K562 (cell line): ENCODE measurements at regions of chr7 and their contacts with region 1.

Region 1: DNA sequence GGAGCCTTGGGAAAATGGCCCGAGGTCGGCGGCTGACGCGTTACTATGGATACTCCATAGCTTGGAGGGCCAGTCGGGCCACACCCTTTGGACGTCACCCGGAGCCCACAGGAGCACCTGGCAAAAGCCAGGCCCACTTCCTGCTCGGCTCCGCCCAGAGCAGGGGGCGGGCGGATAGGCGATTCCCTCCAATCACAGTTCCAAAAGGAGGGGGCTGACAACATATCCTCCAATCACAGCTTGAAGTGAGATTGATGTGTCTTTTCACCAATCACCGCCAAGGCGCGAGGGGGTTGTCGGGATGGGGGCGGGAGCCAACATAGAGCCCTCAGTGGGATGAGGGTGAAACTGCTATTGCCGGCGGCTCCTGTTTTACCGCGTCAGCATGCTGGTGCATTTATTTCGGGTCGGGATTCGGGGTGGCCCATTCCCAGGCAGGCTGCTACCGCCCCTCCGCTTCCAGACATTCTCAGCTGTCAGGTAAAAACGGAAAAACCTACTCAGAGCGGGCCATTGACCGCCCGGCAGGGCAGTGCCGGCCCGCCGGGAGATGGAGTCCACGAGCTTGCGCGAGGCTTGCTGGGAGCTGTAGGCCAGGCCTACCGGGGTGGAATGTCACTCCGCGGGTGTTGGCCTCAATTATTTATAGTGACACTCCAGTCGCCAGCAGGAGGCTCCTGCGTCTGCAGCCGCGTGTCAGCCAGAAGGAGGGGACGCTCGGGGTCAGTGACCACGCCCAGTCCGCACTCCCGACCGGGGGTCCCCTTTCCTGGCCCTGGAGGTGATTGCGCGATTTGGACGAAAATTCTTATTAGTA is at the start of gene ABCB8:
- DNase-seq: peak; percentile 100
- ATAC-seq: peak; percentile 93
- H3K4me3 ChIP-seq: peak within 1 kb of the TSS; percentile 58
- H3K27ac ChIP-seq: peak within 1 kb of the TSS; percentile 73
- H3K4me1 ChIP-seq: peaks cover 35 to 56% of the 10 kb centered on the region in 2 experiments
- H3K27me3 ChIP-seq: no peaks in the 10 kb centered on the region
- CTCF ChIP-seq: peak; percentile 92 to 96 (median 93)
- EP300 ChIP-seq: peak; percentile 50; the same call in 1 of the 2 replicates
- POLR2A ChIP-seq: peak; percentile 88
- RAD21 ChIP-seq: peak; percentile 85 to 89
- polyA plus RNA-seq, gene ABCB8: 7.6 to 9.2 TPM

Region 2: DNA sequence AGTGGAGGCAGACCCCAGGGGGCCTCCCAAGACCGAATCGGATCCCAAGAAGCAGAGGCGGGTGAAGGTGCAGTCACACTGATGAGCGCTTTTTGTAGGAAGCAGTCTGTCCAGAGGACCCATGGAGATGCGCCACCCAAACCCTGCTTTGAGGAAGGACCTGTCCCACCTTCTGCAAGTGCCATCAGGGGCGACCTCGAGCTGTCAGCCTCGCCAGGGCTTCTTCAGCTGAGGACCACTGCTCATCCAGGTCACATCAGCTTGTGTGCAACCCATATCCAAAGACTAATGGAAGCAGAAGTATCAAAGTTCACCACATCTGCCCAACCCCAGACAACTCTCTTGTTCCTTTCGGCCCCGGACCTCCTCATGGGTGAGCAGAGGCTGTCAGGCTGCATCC is 111.7 kb before region 1 on chr7:
- CTCF ChIA-PET with region 1: no interaction called
- POLR2A ChIA-PET with region 1: no interaction called
- in situ Hi-C with region 1: no loop called
- intact Hi-C with region 1: no loop called
- DNase-seq: no peak
- ATAC-seq: no peak
- H3K4me3 ChIP-seq: no peak overlapping the region
- H3K27ac ChIP-seq: no peak overlapping the region
- H3K4me1 ChIP-seq: peaks cover 4 to 18% of the 10 kb centered on the region in 2 experiments; a peak in 3 of 5 replicates
- H3K27me3 ChIP-seq: peaks cover 8 to 27% of the 10 kb centered on the region in 2 experiments
- CTCF ChIP-seq: no peak
- EP300 ChIP-seq: no peak
- POLR2A ChIP-seq: no peak
- RAD21 ChIP-seq: no peak

Region 3: DNA sequence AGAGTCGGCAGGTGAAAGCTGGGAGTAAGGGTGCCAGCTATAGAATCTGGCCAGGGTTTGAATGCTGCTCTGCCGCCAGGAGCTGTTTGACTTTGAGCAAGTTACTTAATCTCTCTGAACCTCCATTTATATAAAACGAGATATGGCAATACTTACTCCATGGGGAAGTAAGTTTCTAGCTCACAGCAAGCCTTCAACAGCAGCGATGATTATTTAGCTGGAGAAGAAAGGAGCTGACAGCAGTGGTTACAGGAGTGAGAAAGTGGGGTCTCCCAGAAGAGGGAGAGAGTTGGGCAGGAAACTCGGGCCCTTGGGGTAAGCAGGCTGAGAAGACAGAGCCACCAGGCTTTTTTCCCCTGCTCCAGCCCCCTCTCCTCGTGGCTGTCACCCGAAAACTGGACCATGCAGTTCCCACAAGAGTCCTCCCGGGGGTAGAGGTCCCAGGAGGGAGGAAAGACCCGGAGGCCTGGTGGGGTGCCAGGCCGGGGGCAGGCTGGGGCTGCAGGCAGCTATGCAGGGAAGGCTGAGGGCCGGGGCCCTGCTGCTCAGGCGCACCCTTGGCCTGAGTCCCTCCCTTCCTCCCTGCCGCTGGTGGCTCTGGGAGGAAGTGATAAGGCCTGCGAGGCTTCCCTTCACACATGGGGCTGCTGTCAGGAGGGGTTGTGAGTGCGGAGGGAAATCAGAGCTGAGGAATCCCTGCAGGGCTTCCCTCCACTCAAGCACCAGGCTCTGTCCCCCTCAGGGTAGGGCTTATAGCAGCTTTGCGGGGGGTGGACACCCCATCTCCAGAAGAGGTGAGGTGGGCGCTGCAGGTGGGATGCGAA is 34.0 kb before region 1 on chr7:
- CTCF ChIA-PET with region 1: no interaction called
- POLR2A ChIA-PET with region 1: interaction called, 3 read pairs
- in situ Hi-C with region 1: no loop called
- intact Hi-C with region 1: loop called (anchors 1 kb)
- DNase-seq: peak; percentile 92 to 98 (median 95)
- ATAC-seq: peak; percentile 93
- H3K4me3 ChIP-seq: no peak overlapping the region
- H3K27ac ChIP-seq: peak overlapping the region; percentile 59
- H3K4me1 ChIP-seq: peaks cover 46 to 56% of the 10 kb centered on the region in 2 experiments
- H3K27me3 ChIP-seq: no peaks in the 10 kb centered on the region
- CTCF ChIP-seq: no peak; a peak in 1 of 6 replicates
- EP300 ChIP-seq: peak; percentile 84
- POLR2A ChIP-seq: peak; percentile 55; the same call in 1 of the 2 replicates
- RAD21 ChIP-seq: peak in 1 of 2 experiments; percentile 15; a peak in 1 of 4 replicates

Region 4: GRCh38 chr7:151017953-151018420 is 10.4 kb before region 1 on chr7:
- CTCF ChIA-PET with region 1: no interaction called
- POLR2A ChIA-PET with region 1: interaction called, 146 read pairs
- in situ Hi-C with region 1: no loop called
- intact Hi-C with region 1: loop called (anchors 1 kb)
- DNase-seq: peak; percentile 88 to 92 (median 90)
- ATAC-seq: peak; percentile 93
- H3K4me3 ChIP-seq: peak overlapping the region; percentile 40
- H3K27ac ChIP-seq: peak overlapping the region; percentile 70
- H3K4me1 ChIP-seq: peaks cover 21 to 69% of the 10 kb centered on the region in 2 experiments; a peak in 4 of 5 replicates
- H3K27me3 ChIP-seq: no peaks in the 10 kb centered on the region; a peak in 1 of 5 replicates
- CTCF ChIP-seq: peak; percentile 95 to 100 (median 98)
- EP300 ChIP-seq: no peak
- POLR2A ChIP-seq: peak; percentile 68
- RAD21 ChIP-seq: peak; percentile 87 to 89

Region 5: DNA sequence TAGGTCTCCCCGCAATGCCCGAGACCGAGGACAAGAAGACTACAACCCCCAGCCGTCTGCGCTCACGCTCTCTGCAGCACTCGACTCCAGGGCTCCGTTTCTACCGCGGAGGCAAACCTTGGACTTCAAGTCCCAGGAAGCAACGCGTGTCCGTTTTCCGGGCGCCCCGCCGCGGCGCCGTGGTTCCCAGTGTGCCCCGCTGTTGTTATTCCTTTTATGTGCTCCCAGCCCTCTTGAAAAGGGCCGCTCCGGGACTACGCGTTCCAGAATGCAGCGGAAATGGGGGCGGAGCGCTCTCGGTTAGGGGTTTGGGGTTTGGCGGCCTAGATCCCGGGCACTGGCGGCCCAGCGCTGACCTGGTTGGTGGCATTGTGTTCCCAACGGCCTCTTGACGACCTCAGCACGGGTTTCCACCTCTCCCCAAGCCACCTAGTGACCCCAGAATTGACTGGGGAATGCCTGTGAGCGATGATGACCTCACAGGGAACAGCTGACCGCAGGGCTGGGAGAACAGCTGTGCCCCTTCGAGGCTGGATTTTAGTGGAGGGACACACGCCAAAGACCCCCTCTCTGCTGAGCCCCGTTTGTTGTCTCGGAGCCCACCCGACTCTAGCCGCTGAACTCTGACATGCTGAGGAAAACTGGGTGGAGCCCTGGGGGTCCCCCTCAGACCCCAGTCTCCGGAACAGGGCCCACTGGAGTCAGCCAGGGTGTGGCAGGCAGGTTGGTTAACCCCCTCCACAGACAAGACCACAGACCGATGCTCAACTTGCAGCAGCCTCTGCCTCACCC is 29.8 kb after region 1 on chr7:
- CTCF ChIA-PET with region 1: interaction called, 14 read pairs
- POLR2A ChIA-PET with region 1: interaction called, 6 read pairs
- in situ Hi-C with region 1: no loop called
- intact Hi-C with region 1: loop called (anchors 1 kb)
- DNase-seq: peak; percentile 96 to 100 (median 98)
- ATAC-seq: peak; percentile 86
- H3K4me3 ChIP-seq: peak overlapping the region; percentile 84
- H3K27ac ChIP-seq: peak overlapping the region; percentile 90
- H3K4me1 ChIP-seq: peaks cover 59 to 75% of the 10 kb centered on the region in 2 experiments
- H3K27me3 ChIP-seq: no peaks in the 10 kb centered on the region
- CTCF ChIP-seq: no peak
- EP300 ChIP-seq: peak; percentile 19; the same call in 1 of the 2 replicates
- POLR2A ChIP-seq: peak; percentile 79
- RAD21 ChIP-seq: 0 out of 4 replicates have a peak, but pooled peaks of 1 of the 2 experiments have one; percentile 7

Region 6: GRCh38 chr7:151110941-151111645 is 82.8 kb after region 1 on chr7:
- CTCF ChIA-PET with region 1: interaction called, 33 read pairs
- POLR2A ChIA-PET with region 1: interaction called, 7 read pairs
- in situ Hi-C with region 1: no loop called
- intact Hi-C with region 1: loop called (anchors 1 kb)
- DNase-seq: peak; percentile 88 to 93 (median 92)
- ATAC-seq: peak; percentile 91
- H3K4me3 ChIP-seq: no peak overlapping the region
- H3K27ac ChIP-seq: no peak overlapping the region; the same call in 2 of the 3 replicates
- H3K4me1 ChIP-seq: peaks cover 51 to 73% of the 10 kb centered on the region in 2 experiments
- H3K27me3 ChIP-seq: no peaks in the 10 kb centered on the region
- CTCF ChIP-seq: peak; percentile 94 to 95 (median 95)
- EP300 ChIP-seq: no peak
- POLR2A ChIP-seq: no peak
- RAD21 ChIP-seq: peak; percentile 94